ENCODE measurements at regions of chr1 and their contacts with region 1.

Region 1: GRCh38 chr1:175319418-175320230 is 127.0 kb upstream of the KIAA0040 start:
- DNase-seq: peak; percentile 44 to 56
- H3K4me3 ChIP-seq: no peak overlapping the region
- H3K27ac ChIP-seq: no peak overlapping the region
- H3K4me1 ChIP-seq: peaks cover 22% of the 10 kb centered on the region
- H3K27me3 ChIP-seq: no peaks in the 10 kb centered on the region
- CTCF ChIP-seq: peak; percentile 90

Region 2: DNA sequence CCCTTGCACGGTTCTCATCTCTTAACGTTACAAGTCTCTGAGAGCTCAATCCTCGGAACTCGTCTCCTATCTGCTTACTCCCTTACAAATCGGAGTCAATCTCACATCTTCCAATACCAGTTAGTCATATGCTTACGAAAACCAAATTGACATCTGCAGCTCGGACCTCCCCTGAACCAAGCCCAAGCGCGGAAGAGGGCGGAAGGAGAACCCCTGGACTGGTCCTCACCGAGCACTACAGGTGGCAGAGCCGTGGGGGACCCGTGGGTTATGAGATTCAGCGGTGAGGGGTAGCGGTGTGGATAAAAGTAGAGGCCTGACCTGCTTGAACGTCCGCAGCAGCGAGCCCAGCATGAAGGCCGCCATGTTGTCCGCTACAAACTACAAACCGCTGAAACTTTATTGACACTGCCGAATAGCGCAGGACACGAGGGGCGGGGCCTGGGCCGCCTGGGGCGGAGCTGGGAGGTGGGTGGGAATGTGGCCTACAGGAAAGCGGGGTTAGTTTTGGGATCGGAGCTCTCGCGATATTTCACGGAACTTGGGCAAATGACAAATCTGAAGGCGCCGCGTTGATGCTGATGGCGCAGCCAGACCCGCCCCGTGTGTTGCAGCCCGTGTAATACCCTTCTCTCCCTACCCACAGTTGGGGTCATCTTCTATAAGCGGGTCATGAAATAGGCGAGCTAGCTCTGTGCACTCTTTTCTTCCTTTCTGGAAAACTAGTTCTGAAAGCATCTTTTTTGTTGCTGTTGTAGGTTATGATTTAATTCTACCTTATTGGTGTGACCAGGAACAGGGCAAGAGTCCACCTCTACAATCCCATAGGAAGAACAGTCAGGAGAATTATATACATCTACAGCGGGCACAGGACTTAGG is 296.3 kb before region 1 on chr1 and contains the start of gene MRPS14:
- CTCF ChIA-PET with region 1: no interaction called
- POLR2A ChIA-PET with region 1: no interaction called
- intact Hi-C with region 1: loop called (anchors 5 kb)
- DNase-seq: peak; percentile 88 to 96
- H3K4me3 ChIP-seq: peak within 1 kb of the TSS; percentile 95
- H3K27ac ChIP-seq: peak within 1 kb of the TSS; percentile 82
- H3K4me1 ChIP-seq: peaks cover 12% of the 10 kb centered on the region; the same call in 1 of the 2 replicates
- H3K27me3 ChIP-seq: no peaks in the 10 kb centered on the region
- CTCF ChIP-seq: no peak
- total RNA-seq, gene MRPS14: 24.1 and 28.8 TPM in 2 replicates

Region 3: GRCh38 chr1:175307160-175307559 is 12.5 kb before region 1 on chr1:
- CTCF ChIA-PET with region 1: no interaction called
- POLR2A ChIA-PET with region 1: no interaction called
- intact Hi-C with region 1: no loop called
- DNase-seq: no peak
- H3K4me3 ChIP-seq: no peak overlapping the region
- H3K27ac ChIP-seq: no peak overlapping the region
- H3K4me1 ChIP-seq: peaks cover 16% of the 10 kb centered on the region
- H3K27me3 ChIP-seq: no peaks in the 10 kb centered on the region
- CTCF ChIP-seq: no peak